H1 (cell line): ENCODE measurements at regions of chr5 and their contacts with region 1.

Region 1: DNA sequence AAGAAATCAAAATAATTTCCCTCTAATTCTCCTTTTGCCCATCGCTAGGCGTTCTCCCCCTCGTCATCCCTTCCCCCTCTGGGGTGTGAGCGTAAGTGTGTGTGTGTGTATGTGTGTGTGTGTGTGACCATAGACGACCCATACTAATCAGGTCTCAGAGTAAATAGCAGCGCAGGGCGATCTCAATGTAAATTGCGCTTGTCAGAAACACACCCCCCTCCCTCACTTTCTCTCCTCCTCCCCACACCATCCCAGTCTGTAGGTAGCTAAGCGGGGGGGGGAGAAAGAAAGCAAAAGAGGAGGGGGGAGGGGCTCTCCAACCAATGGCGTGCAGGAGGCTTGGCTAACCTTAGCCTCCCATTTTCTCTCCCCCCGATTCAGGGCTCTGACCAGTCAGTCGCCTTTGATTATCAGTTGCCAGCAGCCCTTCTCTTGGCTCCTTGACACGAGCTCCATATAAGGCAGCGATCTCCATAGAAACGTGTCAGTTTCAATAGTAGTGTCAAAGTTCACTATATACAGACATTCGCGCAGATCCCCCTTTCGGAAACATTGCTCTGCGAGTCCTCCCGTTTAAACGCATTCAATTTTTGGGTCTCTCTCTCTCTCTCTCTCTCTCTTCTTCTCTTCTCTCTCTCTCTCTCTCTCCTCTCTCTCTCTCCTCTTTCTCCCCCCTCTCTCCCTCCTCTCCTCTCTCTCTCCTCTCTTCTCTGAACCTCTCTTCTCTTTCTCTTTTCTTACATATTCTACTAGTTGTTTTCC is at the start of gene NR2F1:
- DNase-seq: peak; percentile 61 to 78
- H3K4me3 ChIP-seq: peak within 1 kb of the TSS; percentile 11 to 61 (median 24); a peak in 6 of 8 replicates
- H3K27ac ChIP-seq: no peak within 1 kb of the TSS
- H3K4me1 ChIP-seq: peaks cover 0 to 33% (median 23%) of the 10 kb centered on the region in 4 experiments; a peak in 5 of 7 replicates
- H3K27me3 ChIP-seq: peaks cover 70 to 97% (median 84%) of the 10 kb centered on the region in 4 experiments
- CTCF ChIP-seq: no peak
- EP300 ChIP-seq: no peak
- POLR2A ChIP-seq: no peak
- RAD21 ChIP-seq: no peak
- total RNA-seq, gene NR2F1: not detected in 2 replicates

Region 2: DNA sequence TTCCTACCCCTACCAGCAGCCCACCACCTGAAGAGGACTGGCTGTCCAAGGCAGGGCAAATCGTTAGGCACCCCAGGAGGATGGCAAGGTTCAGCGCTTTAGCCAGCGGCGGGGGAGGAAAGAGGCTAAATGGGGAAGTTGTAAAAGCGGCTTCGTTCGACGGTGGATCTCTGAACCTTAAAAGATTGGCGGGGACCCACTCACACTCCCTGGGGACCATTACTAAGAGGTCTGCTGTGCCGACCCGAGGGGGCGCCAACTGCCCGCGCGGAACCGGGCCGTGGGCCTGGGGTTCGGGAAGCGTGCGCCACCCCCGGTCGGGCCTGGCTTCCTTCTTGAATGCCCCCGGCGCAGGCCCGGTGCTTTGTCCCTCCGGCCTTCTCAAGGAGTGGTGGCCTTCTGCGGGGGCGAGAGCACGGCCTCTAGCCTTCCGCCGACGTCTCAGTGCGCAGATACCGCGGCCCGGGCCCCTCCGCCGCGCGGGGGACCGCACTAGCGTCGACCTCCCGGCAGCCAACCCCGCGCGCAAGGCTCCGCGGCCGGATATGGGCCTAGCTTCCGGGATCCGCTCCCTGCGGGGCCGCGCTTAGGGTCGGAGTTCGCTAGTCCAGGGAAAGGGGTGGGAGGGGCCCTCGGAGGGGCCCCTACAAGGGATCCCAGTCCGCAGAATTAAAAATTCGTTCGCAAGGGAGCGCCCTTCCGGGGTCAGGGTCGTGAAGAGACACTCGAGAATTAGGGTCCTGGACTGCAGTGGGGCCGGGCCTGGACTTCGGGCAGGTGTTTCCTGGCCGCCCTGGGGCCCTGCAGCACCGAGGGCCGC is 12.4 kb before region 1 on chr5:
- CTCF ChIA-PET with region 1: interaction called, 12 read pairs
- POLR2A ChIA-PET with region 1: no interaction called
- DNase-seq: peak in 1 of 2 experiments; percentile 82
- H3K4me3 ChIP-seq: peak overlapping the region; percentile 16 to 59 (median 30)
- H3K27ac ChIP-seq: no peak overlapping the region
- H3K4me1 ChIP-seq: peaks cover 10 to 27% (median 17%) of the 10 kb centered on the region in 4 experiments
- H3K27me3 ChIP-seq: peaks cover 56 to 74% (median 73%) of the 10 kb centered on the region in 4 experiments
- CTCF ChIP-seq: peak in 1 of 3 experiments; percentile 8; a peak in 1 of 4 replicates
- EP300 ChIP-seq: no peak
- POLR2A ChIP-seq: no peak
- RAD21 ChIP-seq: no peak

Region 3: DNA sequence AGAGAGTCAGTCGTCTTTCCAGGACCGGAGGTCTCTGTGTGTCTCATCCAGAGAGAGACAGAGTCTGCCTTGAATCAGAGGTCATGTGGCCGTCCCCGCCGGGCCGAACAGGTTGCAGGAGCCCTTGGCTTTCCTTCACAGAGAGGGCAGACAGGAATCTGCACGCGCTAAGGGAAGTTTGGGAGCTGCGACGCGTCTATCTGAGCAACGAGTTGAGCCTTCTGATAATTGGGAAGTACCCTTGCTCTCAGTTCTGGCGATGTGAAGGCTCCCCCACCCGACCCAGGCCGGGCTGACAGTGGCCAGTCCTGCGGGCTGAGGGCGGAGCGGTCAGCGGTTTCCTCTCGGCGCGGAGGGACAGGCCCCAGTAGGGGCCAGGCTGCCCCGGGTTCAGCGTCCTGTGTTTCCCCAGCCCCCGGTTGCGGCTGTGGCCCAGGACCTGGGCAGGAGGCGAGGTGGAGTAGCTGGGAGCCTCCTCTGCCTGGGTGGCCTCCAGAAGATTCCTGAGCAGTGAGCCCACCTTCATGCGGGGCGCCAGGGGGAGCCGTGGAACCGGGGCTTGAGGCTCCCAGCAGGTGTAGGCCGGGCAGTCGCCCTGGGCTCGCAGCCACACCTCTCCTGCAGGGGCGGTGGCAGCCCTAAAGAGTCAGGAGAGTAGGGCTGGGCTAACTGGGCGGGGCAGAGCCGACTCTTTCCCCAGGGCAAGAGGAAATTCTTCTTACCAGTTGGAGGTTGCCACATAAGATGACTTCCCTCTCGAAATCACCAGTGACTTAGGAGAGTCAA is 14.0 kb after region 1 on chr5:
- CTCF ChIA-PET with region 1: interaction called, 32 read pairs
- POLR2A ChIA-PET with region 1: interaction called, 10 read pairs
- DNase-seq: no peak
- H3K4me3 ChIP-seq: peak overlapping the region in 3 of 4 experiments; percentile 13 to 47 (median 15); a peak in 5 of 8 replicates
- H3K27ac ChIP-seq: no peak overlapping the region
- H3K4me1 ChIP-seq: peaks cover 5 to 28% (median 18%) of the 10 kb centered on the region in 4 experiments
- H3K27me3 ChIP-seq: peaks cover 94 to 100% (median 97%) of the 10 kb centered on the region in 4 experiments
- CTCF ChIP-seq: peak; percentile 31 to 49 (median 42)
- EP300 ChIP-seq: no peak
- POLR2A ChIP-seq: no peak
- RAD21 ChIP-seq: peak; percentile 61 to 69